Activated CD4-positive, alpha-beta memory T cell treated with anti-CD3 and anti-CD28 coated beads for 36 hours (primary cell): ENCODE measurements at regions of chr18 and their contacts with region 1.

Region 1: DNA sequence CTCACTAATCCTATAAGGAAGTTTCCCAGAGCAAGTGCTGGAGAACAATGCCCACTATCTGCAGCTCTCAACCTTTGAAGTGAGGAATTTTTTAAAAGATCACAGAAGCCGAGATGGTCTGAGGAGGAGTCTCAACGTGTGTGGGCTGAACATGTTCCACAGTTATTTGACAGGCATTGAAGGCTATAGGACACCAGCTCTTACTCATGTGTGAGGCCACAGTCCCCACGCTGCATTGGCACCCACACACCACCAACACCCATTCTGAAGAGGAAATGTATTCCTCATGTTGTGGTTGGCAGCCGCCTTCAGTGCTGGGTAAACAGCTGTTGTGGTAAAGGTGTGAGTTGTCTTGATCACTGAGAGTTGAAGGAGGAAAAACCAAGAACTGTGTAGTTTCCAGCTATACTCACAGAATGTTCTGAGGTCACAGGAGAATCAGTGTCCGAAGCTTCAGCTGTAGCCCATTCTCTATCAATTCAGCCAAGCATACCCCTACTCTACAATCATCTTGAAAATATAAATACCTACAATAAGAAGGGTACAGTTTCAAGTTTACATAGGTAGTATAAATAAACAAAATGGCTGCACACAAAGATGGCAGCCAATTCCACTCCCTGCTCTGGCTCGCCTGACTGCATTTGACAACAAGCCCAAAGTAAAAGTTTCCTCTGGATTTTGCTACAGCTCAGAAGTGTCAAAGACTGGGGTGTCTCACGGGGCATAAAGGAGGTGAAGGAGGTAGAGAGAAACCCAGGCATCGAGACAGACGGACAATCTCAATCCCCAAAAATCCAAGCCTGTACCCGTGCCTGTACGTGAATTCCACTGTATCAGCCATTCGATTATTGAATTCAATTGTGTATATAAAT is 12.1 kb downstream of the CD226 start:
- DNase-seq: peak; percentile 94
- H3K4me3 Mint-ChIP-seq: no peak overlapping the region
- H3K27ac Mint-ChIP-seq: no peak overlapping the region
- H3K4me1 Mint-ChIP-seq: peaks cover 37% of the 10 kb centered on the region
- H3K27me3 Mint-ChIP-seq: no peaks in the 10 kb centered on the region

Region 2: GRCh38 chr18:69916412-69916811 is 19.1 kb before region 1 on chr18:
- CTCF ChIA-PET with region 1: interaction called, 4 read pairs
- POLR2A ChIA-PET with region 1: interaction called, 14 read pairs
- intact Hi-C with region 1: no loop called
- DNase-seq: no peak
- H3K4me3 Mint-ChIP-seq: no peak overlapping the region
- H3K27ac Mint-ChIP-seq: no peak overlapping the region
- H3K4me1 Mint-ChIP-seq: peaks cover 71% of the 10 kb centered on the region
- H3K27me3 Mint-ChIP-seq: no peaks in the 10 kb centered on the region

Region 3: GRCh38 chr18:69948919-69949537 is 13.5 kb after region 1 on chr18:
- CTCF ChIA-PET with region 1: interaction called, 11 read pairs
- POLR2A ChIA-PET with region 1: interaction called, 38 read pairs
- intact Hi-C with region 1: loop called (anchors 1 kb)
- DNase-seq: peak; percentile 85
- H3K4me3 Mint-ChIP-seq: no peak overlapping the region
- H3K27ac Mint-ChIP-seq: no peak overlapping the region
- H3K4me1 Mint-ChIP-seq: peaks cover 50% of the 10 kb centered on the region
- H3K27me3 Mint-ChIP-seq: no peaks in the 10 kb centered on the region